GM10248 (cell line): ENCODE measurements at regions of chr6 and their contacts with region 1.

Region 1: DNA sequence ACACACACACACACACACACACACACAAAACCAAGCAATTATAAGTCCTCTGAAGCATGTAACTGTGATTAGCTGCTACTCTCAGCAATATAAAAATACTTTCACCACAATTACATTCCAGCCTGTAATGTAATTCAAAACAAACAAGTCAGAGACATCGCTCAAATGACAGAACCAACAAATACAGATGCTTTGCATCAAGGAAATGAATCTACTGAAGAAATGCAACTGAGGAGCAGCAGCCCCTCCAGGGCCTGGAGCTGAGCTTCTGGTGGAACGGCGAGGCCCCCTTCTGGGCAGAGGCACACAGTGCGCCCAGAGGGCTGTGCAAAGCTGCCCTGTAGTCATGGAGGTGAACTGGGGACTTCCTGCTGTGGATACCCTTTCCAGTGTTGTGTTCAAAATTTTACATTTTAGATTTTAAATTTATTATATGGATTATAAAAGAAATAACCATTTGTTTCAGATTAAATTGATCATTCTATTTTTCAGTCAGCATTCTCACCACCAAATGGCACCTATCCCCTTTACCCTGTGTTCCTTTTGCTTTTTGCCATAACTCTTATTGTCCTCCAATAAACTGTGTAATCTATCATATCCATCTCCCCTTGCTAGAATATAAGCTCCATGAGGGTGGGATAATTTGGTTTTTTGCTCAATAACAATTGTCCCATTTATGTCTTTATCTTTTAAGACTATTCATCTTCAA is 23.2 kb downstream of the ADAT2 start:
- DNase-seq: peak; percentile 76
- CTCF ChIP-seq: peak; percentile 97

Region 2: GRCh38 chr6:142566628-142567396 is 860.5 kb before region 1 on chr6:
- CTCF ChIA-PET with region 1: interaction called, 21 read pairs
- POLR2A ChIA-PET with region 1: no interaction called
- DNase-seq: peak; percentile 63
- CTCF ChIP-seq: peak; percentile 89

Region 3: DNA sequence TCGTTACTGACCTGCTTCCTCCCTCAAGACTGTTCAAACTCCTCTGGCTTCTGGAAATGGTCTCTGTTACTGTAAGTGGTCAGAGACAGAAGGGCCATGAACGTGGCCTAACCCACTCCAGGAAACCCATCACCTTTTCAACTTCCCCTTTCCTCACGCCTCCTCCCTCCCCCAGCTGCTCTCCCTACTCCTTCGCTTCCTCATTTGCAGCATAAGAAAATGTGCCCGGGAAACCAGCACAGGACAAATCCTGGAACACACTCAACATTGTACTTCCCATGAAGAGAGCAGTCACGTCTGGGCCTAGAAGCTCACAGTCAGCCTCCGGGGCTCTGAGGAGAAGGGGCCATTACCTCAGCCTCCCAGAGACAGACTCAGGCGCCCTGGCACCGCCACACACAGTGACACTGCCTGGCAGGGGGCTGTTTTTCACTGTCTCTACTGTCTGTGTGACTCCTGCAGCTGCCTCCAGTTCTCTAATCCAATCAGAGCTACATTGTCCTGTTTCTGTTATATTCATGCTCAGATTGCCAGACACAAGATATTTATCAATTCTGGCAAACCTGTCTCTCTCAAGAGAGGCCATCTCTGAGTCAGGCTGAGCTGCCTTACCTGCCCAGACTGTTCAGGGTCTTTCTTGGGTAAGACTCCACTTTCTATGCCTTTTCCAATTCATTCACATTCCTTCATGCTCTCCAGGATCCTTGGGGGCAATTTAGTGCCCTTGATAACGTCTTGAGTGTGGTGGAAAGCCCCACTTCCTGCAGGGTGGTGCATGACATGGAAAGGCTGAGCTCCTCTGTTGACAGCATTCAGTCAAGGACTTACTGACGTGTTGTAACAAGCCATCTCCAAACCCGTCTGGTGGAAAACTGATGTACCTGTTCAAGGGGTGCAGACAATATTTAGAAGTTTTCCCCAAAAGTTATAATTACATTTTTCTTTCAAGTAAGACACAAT is 724.5 kb before region 1 on chr6:
- CTCF ChIA-PET with region 1: interaction called, 44 read pairs
- POLR2A ChIA-PET with region 1: no interaction called
- DNase-seq: peak; percentile 32
- CTCF ChIP-seq: no peak

Region 4: GRCh38 chr6:143397229-143398222 is 29.7 kb before region 1 on chr6:
- CTCF ChIA-PET with region 1: interaction called, 19 read pairs
- POLR2A ChIA-PET with region 1: no interaction called
- DNase-seq: no peak
- CTCF ChIP-seq: no peak

Region 5: GRCh38 chr6:143441680-143442545 is 14.7 kb after region 1 on chr6:
- CTCF ChIA-PET with region 1: interaction called, 27 read pairs
- POLR2A ChIA-PET with region 1: no interaction called
- DNase-seq: no peak
- CTCF ChIP-seq: no peak